Calu3 (cell line): ENCODE measurements at regions of chr7 and their contacts with region 1.

Region 1: DNA sequence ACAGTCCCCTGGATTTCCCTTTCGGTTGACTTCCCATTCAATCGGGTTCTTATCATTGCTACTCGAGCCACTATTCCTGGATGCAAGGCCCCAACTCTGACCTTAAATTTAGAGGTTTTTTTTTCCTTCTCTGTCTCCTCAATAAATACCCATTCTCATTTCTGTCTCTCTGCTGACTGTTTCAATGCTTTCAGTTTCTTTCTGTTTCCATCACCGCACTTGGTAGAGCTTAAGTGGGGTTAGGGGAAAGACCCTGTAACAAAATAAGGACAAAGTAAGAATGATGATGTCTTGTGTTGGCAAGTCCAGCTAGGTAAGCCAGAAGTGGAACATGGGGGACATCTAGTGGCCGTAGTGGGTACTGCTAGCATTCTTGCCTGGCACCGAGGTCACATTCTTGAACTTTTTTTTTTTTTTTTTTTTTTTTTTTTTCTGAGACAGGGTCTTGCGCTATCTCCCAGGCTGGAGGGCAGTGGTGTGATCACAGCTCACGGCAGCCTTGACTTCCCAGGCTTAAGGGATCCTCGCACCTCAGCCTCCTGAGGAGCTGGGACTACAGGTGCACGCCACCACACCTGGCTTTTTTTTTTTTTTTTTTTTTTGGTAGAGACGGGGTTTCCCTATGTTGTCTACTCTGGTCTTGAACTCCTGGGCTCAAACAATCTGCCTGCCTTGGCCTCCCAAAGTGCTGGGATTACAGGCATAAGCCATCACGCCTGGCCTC is 40.3 kb downstream of the ZC3HC1 start:
- DNase-seq: peak; percentile 90
- H3K4me3 Mint-ChIP-seq: peak overlapping the region; percentile 2
- H3K27ac Mint-ChIP-seq: peak overlapping the region; percentile 82
- H3K4me1 Mint-ChIP-seq: peaks cover 31% of the 10 kb centered on the region
- H3K27me3 Mint-ChIP-seq: no peaks in the 10 kb centered on the region
- CTCF ChIP-seq: peak; percentile 87

Region 2: DNA sequence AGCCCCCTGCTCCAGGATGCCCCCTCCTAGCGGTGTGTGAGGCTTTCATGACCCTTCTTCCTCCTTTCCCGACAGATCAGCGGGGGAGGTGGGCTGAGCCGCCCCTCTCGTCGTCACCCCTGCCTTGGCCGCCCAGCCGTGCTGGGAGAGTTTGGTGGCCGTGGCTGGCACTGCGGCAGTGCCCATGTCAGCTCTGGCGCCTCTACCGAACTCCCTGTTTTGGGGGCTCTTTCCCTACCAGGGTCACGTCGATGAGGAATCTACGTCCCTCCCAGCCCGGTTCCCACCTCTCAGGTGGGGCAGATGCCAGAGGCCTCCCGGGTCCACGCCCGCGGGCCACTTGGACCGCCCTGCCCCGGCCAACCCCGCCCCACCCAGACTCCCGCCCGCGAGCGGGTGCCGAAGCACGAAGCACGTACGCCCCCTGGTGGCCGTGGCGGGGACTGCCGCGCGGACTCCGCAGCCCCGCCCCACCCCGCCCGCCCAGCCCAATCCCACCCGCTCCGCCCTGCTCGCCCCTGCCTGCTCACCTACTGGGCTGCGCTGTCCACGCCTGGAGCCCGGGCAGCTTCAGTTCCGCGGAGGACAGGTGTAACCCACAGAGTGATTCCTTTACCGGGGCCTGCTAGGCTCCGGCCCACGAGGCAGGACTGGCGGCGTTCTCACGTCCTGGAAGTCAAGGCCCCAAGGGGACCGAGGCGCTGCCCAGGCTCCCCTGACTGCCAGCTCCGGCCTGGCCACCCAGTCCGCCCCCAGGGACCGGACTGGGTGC is 185.2 kb before region 1 on chr7:
- CTCF ChIA-PET with region 1: interaction called, 19 read pairs
- intact Hi-C with region 1: loop called (anchors 2 kb)
- DNase-seq: peak; percentile 95
- H3K4me3 Mint-ChIP-seq: peak overlapping the region; percentile 92
- H3K27ac Mint-ChIP-seq: peak overlapping the region; percentile 87
- H3K4me1 Mint-ChIP-seq: peaks cover 13% of the 10 kb centered on the region
- H3K27me3 Mint-ChIP-seq: no peaks in the 10 kb centered on the region
- CTCF ChIP-seq: peak; percentile 95

Region 3: DNA sequence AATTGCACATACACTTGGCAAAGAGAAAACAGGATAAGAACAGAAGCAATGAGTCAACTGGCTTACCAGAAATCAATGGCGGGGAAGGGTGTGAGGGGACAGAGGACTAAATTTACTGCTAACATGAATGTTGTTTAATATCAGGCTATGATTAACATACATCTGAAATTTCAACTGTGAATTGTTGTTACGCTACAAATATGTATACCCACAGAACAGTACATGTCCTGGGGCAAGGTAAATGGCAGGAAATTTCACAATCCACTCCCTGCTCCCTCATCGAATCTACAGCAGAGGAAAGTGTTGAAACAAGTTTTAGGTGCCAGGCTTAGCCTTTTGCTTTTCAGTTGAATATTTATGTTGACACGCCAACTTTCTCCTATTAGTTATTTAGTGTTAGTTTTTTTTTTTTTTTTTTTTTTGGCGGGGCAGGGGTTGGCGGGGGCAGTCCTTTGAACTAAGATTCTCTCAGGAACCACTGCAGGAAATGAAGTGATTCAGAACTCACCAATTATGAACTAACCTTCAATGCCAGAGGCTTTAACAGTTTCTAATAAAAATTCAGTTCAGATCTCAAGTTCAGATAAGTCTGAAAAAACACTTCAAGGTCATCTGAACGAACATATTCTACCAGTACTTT is 157.1 kb before region 1 on chr7:
- CTCF ChIA-PET with region 1: interaction called, 3 read pairs
- intact Hi-C with region 1: loop called (anchors 5 kb)
- DNase-seq: peak; percentile 22
- H3K4me3 Mint-ChIP-seq: peak overlapping the region; percentile 39
- H3K27ac Mint-ChIP-seq: peak overlapping the region; percentile 23
- H3K4me1 Mint-ChIP-seq: peaks cover 67% of the 10 kb centered on the region
- H3K27me3 Mint-ChIP-seq: no peaks in the 10 kb centered on the region
- CTCF ChIP-seq: no peak

Region 4: DNA sequence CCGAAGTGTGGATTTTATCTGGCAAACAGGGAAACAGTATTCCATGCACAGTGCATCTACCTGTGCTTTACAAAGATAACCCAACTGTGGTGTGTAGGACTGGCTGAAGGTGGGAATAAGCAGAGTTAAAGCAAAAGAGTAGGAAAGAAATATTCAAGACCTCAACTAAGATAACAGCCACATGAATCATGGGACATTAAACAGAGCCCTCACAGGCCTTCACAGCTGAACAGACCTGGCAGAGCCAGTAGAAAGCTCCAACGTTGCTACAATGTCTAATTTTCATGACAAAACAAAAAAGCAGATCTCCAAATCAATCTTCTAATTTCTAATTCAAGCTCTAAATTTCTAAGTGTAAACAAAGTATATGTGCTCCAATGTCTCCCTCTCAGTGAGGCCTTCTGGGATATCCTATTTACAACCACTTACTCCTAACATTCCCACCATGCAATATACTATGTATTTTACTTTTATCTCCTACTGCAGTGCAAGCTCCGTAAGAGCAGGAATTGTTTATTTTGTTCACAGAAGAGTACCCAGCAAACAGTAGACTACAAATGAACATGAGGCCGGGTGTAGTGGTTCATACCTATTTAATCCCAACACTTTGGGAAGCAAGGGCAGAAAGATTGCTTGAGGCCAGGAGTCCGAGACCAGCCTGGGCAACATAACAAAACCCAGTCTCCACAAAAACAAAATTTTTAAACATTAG is 121.6 kb before region 1 on chr7:
- CTCF ChIA-PET with region 1: interaction called, 12 read pairs
- intact Hi-C with region 1: no loop called
- DNase-seq: no peak
- H3K4me3 Mint-ChIP-seq: no peak overlapping the region
- H3K27ac Mint-ChIP-seq: no peak overlapping the region
- H3K4me1 Mint-ChIP-seq: peaks cover 28% of the 10 kb centered on the region
- H3K27me3 Mint-ChIP-seq: no peaks in the 10 kb centered on the region
- CTCF ChIP-seq: no peak

Region 5: DNA sequence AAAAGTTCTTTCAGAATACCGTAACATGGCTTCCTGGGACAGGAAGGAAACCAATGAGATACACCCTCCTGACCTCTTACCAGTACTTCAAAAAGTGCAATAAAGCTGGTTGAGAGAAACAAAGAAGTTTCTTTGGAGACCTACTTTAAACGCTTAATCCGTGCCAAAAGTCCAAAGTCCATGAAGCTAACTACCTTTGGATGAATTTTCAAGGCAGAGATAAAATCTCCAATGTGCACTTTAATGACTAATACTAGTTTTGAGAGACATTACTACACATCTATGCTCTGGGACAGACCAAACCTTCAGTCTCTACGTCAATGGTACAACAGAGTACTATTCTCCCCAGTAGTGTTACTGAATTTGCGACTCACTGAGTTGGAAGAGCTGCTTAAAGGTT is 104.2 kb before region 1 on chr7:
- CTCF ChIA-PET with region 1: interaction called, 8 read pairs
- intact Hi-C with region 1: loop called (anchors 2 kb)
- DNase-seq: peak; percentile 55
- H3K4me3 Mint-ChIP-seq: peak overlapping the region; percentile 60
- H3K27ac Mint-ChIP-seq: peak overlapping the region; percentile 73
- H3K4me1 Mint-ChIP-seq: peaks cover 79% of the 10 kb centered on the region
- H3K27me3 Mint-ChIP-seq: no peaks in the 10 kb centered on the region
- CTCF ChIP-seq: no peak

Region 6: GRCh38 chr7:129952653-129953560 is 57.9 kb before region 1 on chr7 and contains the start of gene UBE2H:
- CTCF ChIA-PET with region 1: interaction called, 31 read pairs
- intact Hi-C with region 1: loop called (anchors 1 kb)
- DNase-seq: peak; percentile 89
- H3K4me3 Mint-ChIP-seq: no peak within 1 kb of the TSS
- H3K27ac Mint-ChIP-seq: no peak within 1 kb of the TSS
- H3K4me1 Mint-ChIP-seq: peaks cover 19% of the 10 kb centered on the region
- H3K27me3 Mint-ChIP-seq: no peaks in the 10 kb centered on the region
- CTCF ChIP-seq: no peak
- total RNA-seq, gene UBE2H: 103 and 115 TPM in 2 replicates

Region 7: DNA sequence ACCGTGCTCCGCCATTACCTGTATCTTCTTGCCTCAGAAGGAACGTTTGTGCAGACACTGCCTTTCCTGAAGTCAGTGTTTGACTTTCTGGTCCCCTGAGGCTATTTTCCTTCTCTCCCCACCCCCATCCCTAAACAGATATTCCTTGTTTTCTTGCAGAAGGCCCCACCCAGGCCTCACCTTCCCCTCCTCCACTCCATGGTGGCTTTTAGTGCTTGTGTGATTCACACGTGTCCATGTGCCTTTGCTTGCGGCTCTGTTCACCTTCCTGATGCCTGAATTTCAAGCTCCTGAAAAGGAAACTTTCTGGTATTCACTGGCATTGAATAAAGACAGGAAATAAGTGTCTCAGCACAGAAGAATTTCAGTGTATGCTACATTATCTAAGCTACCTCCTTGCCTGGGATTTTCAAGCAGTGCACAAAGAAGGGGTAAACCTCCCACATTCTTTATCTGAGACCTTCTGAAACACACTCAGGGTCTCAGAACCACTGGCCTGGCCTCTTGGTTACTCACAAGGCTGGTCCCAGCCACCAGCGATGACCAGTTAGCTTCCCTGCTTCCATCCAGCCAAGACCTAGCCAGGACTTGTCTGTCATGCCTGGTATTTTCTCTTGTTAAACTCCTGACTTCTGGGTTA is 40.9 kb before region 1 on chr7:
- CTCF ChIA-PET with region 1: interaction called, 14 read pairs
- intact Hi-C with region 1: loop called (anchors 5 kb)
- DNase-seq: peak; percentile 91
- H3K4me3 Mint-ChIP-seq: peak overlapping the region; percentile 60
- H3K27ac Mint-ChIP-seq: peak overlapping the region; percentile 98
- H3K4me1 Mint-ChIP-seq: peaks cover 27% of the 10 kb centered on the region
- H3K27me3 Mint-ChIP-seq: no peaks in the 10 kb centered on the region
- CTCF ChIP-seq: no peak